Natural killer cell (primary cell): ENCODE measurements at regions of chr22 and their contacts with region 1.

Region 1: GRCh38 chr22:30224161-30224857 is 22.2 kb downstream of the LIF start:
- DNase-seq: no peak
- ATAC-seq: no peak
- H3K4me3 ChIP-seq: no peak overlapping the region
- H3K4me3 Mint-ChIP-seq: no peak overlapping the region
- H3K27ac ChIP-seq: no peak overlapping the region
- H3K27ac Mint-ChIP-seq: peak overlapping the region in 1 of 2 donors; percentile 93
- H3K4me1 ChIP-seq: peaks cover 92% of the 10 kb centered on the region
- H3K4me1 Mint-ChIP-seq: peaks cover 78 to 88% of the 10 kb centered on the region in 2 donors
- H3K27me3 ChIP-seq: no peaks in the 10 kb centered on the region
- H3K27me3 Mint-ChIP-seq: no peaks in the 10 kb centered on the region
- CTCF ChIP-seq: no peak

Region 2: DNA sequence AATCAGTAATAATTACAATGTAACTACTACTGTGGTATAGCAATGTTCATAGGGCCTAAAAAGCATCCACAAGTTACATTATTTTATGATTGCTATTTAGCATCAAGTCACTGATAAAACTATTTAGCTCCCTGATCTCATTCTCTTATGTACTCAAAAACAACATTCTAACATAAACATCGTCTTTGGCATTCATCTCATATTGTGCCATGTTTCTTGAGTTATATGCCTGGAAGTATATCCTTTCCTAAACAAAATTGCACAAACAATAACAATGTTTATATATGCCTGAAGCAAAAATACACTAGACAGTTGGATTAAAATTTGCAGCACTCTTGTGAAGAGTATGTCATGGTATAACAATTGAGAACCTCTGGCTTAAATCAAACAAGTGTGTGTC is 109.9 kb before region 1 on chr22:
- intact Hi-C with region 1: no loop called
- DNase-seq: no peak
- ATAC-seq: no peak
- H3K4me3 ChIP-seq: no peak overlapping the region
- H3K4me3 Mint-ChIP-seq: no peak overlapping the region
- H3K27ac ChIP-seq: no peak overlapping the region
- H3K27ac Mint-ChIP-seq: no peak overlapping the region
- H3K4me1 ChIP-seq: no peaks in the 10 kb centered on the region
- H3K4me1 Mint-ChIP-seq: peaks cover 0 to 8% of the 10 kb centered on the region in 2 donors
- H3K27me3 ChIP-seq: peaks cover 2% of the 10 kb centered on the region
- H3K27me3 Mint-ChIP-seq: no peaks in the 10 kb centered on the region
- CTCF ChIP-seq: no peak

Region 3: GRCh38 chr22:30187529-30188407 is 36.5 kb before region 1 on chr22:
- intact Hi-C with region 1: loop called (anchors 5 kb)
- DNase-seq: peak in 1 of 2 donors; percentile 23
- ATAC-seq: peak in 2 of 3 donors; percentile 59 to 61
- H3K4me3 ChIP-seq: no peak overlapping the region
- H3K4me3 Mint-ChIP-seq: no peak overlapping the region
- H3K27ac ChIP-seq: no peak overlapping the region
- H3K27ac Mint-ChIP-seq: no peak overlapping the region
- H3K4me1 ChIP-seq: peaks cover 13% of the 10 kb centered on the region
- H3K4me1 Mint-ChIP-seq: peaks cover 24 to 25% of the 10 kb centered on the region in 2 donors
- H3K27me3 ChIP-seq: no peaks in the 10 kb centered on the region
- H3K27me3 Mint-ChIP-seq: no peaks in the 10 kb centered on the region
- CTCF ChIP-seq: no peak

Region 4: DNA sequence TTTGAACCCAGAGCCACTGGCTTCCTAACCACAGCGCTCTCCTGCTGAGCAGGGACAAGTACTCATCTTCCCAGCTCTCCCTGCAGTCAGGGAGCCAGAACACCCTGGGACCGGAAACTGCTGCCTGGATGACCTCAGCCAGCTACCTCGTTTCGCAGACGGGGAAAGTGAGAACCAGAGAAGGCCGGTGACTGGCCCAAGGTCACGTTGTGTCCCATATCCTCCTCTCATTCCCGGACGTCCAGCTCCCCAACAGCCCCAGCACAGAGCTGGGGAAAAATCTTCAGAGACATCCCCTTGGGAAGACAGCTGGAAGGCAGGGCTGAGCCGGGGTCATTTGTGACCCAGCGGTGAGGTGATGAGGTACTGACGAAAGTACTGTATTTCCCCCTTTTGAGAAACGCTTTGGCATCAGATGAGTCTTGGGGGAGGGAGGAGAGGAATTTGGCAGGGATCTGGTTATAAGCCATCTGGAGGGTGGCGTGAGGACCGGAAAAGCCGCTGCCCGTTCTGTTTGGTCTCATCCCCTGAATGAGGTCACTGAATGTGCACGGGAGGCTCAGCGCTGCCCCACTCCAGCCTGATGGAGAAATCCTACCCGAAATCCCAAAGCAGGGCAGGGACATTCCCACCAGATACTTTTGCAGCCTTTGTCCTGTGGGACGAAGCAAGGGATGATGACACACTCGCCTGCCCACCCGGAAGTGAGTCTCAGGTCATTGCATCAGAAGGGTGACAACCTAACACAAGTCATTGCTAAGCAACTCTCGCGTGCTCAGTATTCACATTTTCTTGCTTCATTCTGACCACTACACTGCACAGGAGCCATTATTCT is 18.8 kb before region 1 on chr22:
- intact Hi-C with region 1: no loop called
- DNase-seq: no peak
- ATAC-seq: no peak
- H3K4me3 ChIP-seq: no peak overlapping the region
- H3K4me3 Mint-ChIP-seq: no peak overlapping the region
- H3K27ac ChIP-seq: no peak overlapping the region
- H3K27ac Mint-ChIP-seq: no peak overlapping the region
- H3K4me1 ChIP-seq: no peaks in the 10 kb centered on the region
- H3K4me1 Mint-ChIP-seq: no peaks in the 10 kb centered on the region
- H3K27me3 ChIP-seq: no peaks in the 10 kb centered on the region
- H3K27me3 Mint-ChIP-seq: no peaks in the 10 kb centered on the region
- CTCF ChIP-seq: no peak

Region 5: GRCh38 chr22:30262917-30263741 is 38.8 kb after region 1 on chr22:
- intact Hi-C with region 1: loop called (anchors 2 kb)
- DNase-seq: peak; percentile 76 to 88
- ATAC-seq: no peak
- H3K4me3 ChIP-seq: no peak overlapping the region
- H3K4me3 Mint-ChIP-seq: peak overlapping the region; percentile 28
- H3K27ac ChIP-seq: no peak overlapping the region
- H3K27ac Mint-ChIP-seq: peak overlapping the region; percentile 34 to 84
- H3K4me1 ChIP-seq: peaks cover 61% of the 10 kb centered on the region
- H3K4me1 Mint-ChIP-seq: peaks cover 29 to 52% of the 10 kb centered on the region in 2 donors
- H3K27me3 ChIP-seq: no peaks in the 10 kb centered on the region
- H3K27me3 Mint-ChIP-seq: no peaks in the 10 kb centered on the region
- CTCF ChIP-seq: peak; percentile 100

Region 6: GRCh38 chr22:30289134-30289979 is 65.0 kb after region 1 on chr22 and contains the start of gene CASTOR1:
- intact Hi-C with region 1: no loop called
- DNase-seq: peak; percentile 81 to 90
- ATAC-seq: peak; percentile 80 to 83 (median 81)
- H3K4me3 ChIP-seq: peak within 1 kb of the TSS; percentile 68
- H3K4me3 Mint-ChIP-seq: peak within 1 kb of the TSS; percentile 92
- H3K27ac ChIP-seq: peak within 1 kb of the TSS; percentile 66
- H3K27ac Mint-ChIP-seq: peak within 1 kb of the TSS; percentile 86 to 88
- H3K4me1 ChIP-seq: peaks cover 43% of the 10 kb centered on the region
- H3K4me1 Mint-ChIP-seq: peaks cover 19 to 39% of the 10 kb centered on the region in 2 donors
- H3K27me3 ChIP-seq: no peaks in the 10 kb centered on the region
- H3K27me3 Mint-ChIP-seq: no peaks in the 10 kb centered on the region
- CTCF ChIP-seq: no peak
- total RNA-seq, gene CASTOR1: 7.0 to 11.9 (median 8.8) TPM